Cardiac septum (tissue), 1 donor: ENCODE measurements at regions of chr2 and their contacts with region 1.

Region 1: GRCh38 chr2:113818382-113818951 is 62.0 kb upstream of the SLC35F5 start:
- DNase-seq: no peak

Region 2: GRCh38 chr2:113739849-113740248 is 78.6 kb before region 1 on chr2:
- intact Hi-C with region 1: no loop called
- DNase-seq: no peak

Region 3: DNA sequence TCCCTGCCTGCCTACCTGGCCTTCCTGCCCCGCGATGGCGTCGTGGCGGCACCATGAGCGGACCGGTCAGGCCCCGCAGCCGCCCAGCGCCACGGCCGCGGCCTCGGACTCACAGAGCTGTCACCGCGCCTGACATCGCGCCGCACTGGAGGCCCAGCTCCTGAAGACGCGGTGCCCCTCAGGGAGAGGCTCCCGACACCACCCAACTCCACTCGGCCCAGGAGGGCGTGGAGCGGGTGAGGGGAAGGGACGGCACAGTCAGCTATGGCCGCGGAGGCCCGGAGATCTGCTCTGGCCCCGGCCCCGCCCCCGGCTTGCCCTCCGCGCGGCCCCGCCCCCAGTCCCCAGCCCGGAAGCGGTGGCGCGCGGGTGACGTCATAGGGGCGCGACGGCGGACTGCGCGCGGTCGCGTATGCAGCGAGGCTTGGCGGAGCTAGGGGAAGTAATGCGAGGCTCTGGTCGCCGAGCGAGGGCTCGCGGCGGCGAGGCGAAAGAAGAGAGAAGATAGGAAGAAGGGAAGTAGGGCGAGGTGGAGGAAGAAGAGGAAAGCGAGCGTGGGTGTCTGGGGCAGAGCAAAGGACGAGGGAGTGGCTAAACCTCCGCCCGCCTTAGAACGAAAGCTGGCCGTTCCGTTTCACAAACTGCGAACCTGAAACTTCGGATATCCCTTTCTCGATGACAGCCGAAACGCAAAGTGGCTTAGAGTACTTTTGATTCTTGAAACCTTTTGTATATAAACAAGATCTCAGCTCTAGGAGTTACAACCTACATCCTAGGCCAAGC is 61.9 kb before region 1 on chr2 and contains the start of gene SLC35F5:
- intact Hi-C with region 1: loop called (anchors 2 kb)
- DNase-seq: peak; percentile 97
- total RNA-seq, gene SLC35F5: 66.3 TPM

Region 4: GRCh38 chr2:113889471-113890252 is 71.2 kb after region 1 on chr2 and contains the start of gene ACTR3:
- intact Hi-C with region 1: loop called (anchors 2 kb)
- DNase-seq: peak; percentile 99
- total RNA-seq, gene ACTR3: 152 TPM